ENCODE measurements at regions of chrX and their contacts with region 1.

Region 1: GRCh38 chrX:110317820-110318658 is at the start of gene AMMECR1:
- DNase-seq: peak; percentile 68
- H3K4me3 ChIP-seq: peak within 1 kb of the TSS; percentile 54 to 66
- H3K27ac ChIP-seq: peak within 1 kb of the TSS; percentile 81 to 84
- H3K4me1 ChIP-seq: no peaks in the 10 kb centered on the region
- H3K27me3 ChIP-seq: no peaks in the 10 kb centered on the region
- CTCF ChIP-seq: no peak
- POLR2A ChIP-seq: peak; percentile 61
- total RNA-seq, gene AMMECR1: 3.7 to 4.8 TPM

Region 2: GRCh38 chrX:109732780-109733657 is 585.0 kb before region 1 on chrX and contains the start of gene ACSL4:
- intact Hi-C with region 1: loop called (anchors 10 kb)
- DNase-seq: peak; percentile 79
- H3K4me3 ChIP-seq: peak within 1 kb of the TSS; percentile 48 to 49
- H3K27ac ChIP-seq: peak within 1 kb of the TSS; percentile 71 to 76
- H3K4me1 ChIP-seq: no peaks in the 10 kb centered on the region
- H3K27me3 ChIP-seq: no peaks in the 10 kb centered on the region
- CTCF ChIP-seq: no peak
- POLR2A ChIP-seq: peak; percentile 67
- total RNA-seq, gene ACSL4: 22.9 to 118 TPM

Region 3: GRCh38 chrX:110172215-110172614 is 145.8 kb before region 1 on chrX:
- intact Hi-C with region 1: loop called (anchors 10 kb)
- DNase-seq: no peak
- H3K4me3 ChIP-seq: no peak overlapping the region
- H3K27ac ChIP-seq: no peak overlapping the region
- H3K4me1 ChIP-seq: no peaks in the 10 kb centered on the region
- H3K27me3 ChIP-seq: no peaks in the 10 kb centered on the region
- CTCF ChIP-seq: no peak
- POLR2A ChIP-seq: no peak

Region 4: DNA sequence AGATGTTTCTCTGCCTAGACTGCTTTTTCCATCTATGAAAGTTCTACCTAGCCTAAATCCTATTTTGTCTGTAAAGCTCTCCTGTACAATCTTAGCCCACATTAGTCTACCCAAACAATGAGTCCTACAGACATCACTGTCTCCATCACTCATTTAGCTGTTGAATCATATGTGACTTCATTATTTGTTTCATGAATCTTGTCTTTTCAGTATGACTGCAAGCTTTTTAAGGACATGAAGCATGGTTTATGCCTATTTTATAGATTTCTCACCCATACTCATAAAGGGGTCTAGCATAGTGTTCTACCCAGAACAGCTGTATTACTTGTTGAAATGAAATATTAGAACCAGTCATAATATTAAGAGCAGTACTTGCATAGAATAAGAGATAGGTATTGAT is 13.2 kb before region 1 on chrX:
- intact Hi-C with region 1: no loop called
- DNase-seq: no peak
- H3K4me3 ChIP-seq: no peak overlapping the region
- H3K27ac ChIP-seq: no peak overlapping the region
- H3K4me1 ChIP-seq: no peaks in the 10 kb centered on the region
- H3K27me3 ChIP-seq: no peaks in the 10 kb centered on the region
- CTCF ChIP-seq: no peak
- POLR2A ChIP-seq: no peak

Measured in prostate gland (tissue), 2 donors.